CD4-positive, alpha-beta memory T cell (primary cell): ENCODE measurements at regions of chr7 and their contacts with region 1.

Region 1: GRCh38 chr7:39894904-39895303 is 55.2 kb upstream of the CDK13 start:
- DNase-seq: no peak
- H3K4me3 ChIP-seq: no peak overlapping the region
- H3K4me3 Mint-ChIP-seq: no peak overlapping the region
- H3K27ac ChIP-seq: no peak overlapping the region
- H3K27ac Mint-ChIP-seq: no peak overlapping the region
- H3K4me1 ChIP-seq: no peaks in the 10 kb centered on the region
- H3K4me1 Mint-ChIP-seq: peaks cover 0 to 2% (median 0%) of the 10 kb centered on the region in 4 donors
- H3K27me3 ChIP-seq: no peaks in the 10 kb centered on the region
- H3K27me3 Mint-ChIP-seq: peaks cover 0 to 11% of the 10 kb centered on the region in 2 donors

Region 2: GRCh38 chr7:39910108-39910869 is 15.4 kb after region 1 on chr7:
- CTCF ChIA-PET with region 1: interaction called, 39 read pairs
- POLR2A ChIA-PET with region 1: no interaction called
- intact Hi-C with region 1: no loop called
- DNase-seq: no peak
- H3K4me3 ChIP-seq: no peak overlapping the region
- H3K4me3 Mint-ChIP-seq: no peak overlapping the region
- H3K27ac ChIP-seq: no peak overlapping the region
- H3K27ac Mint-ChIP-seq: no peak overlapping the region
- H3K4me1 ChIP-seq: peaks cover 3% of the 10 kb centered on the region
- H3K4me1 Mint-ChIP-seq: peaks cover 4 to 5% (median 5%) of the 10 kb centered on the region in 4 donors
- H3K27me3 ChIP-seq: no peaks in the 10 kb centered on the region
- H3K27me3 Mint-ChIP-seq: peaks cover 0 to 2% of the 10 kb centered on the region in 2 donors

Region 3: DNA sequence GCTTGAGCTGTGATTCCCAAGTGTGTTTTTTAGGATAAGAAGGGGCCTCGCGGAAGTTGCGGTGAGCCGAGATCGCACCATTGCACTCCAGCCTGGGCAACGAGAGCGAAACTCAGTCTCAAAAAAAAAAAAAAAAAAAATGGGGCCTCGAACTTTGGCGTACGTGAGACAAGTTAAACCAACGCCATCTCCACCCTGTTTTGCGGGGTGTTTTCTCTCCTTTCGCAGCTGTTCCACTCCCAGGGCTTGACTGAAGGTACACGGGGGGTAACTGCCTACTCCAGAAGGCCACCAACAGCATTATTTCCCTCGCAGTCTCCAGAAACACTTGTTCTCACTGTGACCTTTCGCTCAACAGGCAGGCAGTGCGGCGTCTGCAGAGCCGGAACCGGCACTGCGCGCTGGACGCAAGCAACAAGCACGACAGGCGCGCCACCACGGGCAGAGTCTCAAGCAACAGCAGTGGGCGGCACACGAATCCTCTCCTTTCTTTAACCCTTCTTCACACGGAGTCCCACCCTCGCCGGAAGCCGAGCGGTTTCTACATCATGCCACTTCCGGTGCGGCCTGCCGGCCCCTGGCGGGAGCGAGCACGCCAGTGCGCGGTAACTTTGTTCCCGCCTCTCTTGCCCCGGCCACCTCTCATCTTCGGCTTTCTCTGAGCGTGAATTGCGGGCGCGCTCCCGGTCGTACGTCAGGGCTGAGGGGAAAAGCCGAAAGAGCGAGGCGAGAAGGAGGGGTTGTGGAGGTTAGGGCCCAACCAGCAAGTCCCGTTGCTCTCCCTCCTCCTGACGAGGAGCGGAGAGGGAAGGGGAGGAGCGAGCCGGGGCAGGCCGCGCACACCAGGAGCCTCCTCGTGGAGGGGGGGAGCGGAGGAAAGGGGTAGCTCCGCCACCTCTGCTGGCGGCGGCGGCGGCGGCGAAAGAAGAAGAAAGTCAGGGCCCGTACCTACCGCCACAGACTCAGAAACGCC is 54.3 kb after region 1 on chr7:
- CTCF ChIA-PET with region 1: interaction called, 20 read pairs
- POLR2A ChIA-PET with region 1: interaction called, 6 read pairs
- intact Hi-C with region 1: loop called (anchors 1 kb)
- DNase-seq: peak; percentile 98 to 100 (median 99)
- H3K4me3 ChIP-seq: peak overlapping the region; percentile 67 to 73
- H3K4me3 Mint-ChIP-seq: peak overlapping the region; percentile 96 to 99 (median 98)
- H3K27ac ChIP-seq: peak overlapping the region; percentile 94
- H3K27ac Mint-ChIP-seq: peak overlapping the region; percentile 99 to 100 (median 100)
- H3K4me1 ChIP-seq: peaks cover 32% of the 10 kb centered on the region
- H3K4me1 Mint-ChIP-seq: peaks cover 21 to 47% (median 31%) of the 10 kb centered on the region in 4 donors
- H3K27me3 ChIP-seq: no peaks in the 10 kb centered on the region
- H3K27me3 Mint-ChIP-seq: peaks cover 0 to 5% of the 10 kb centered on the region in 2 donors

Region 4: DNA sequence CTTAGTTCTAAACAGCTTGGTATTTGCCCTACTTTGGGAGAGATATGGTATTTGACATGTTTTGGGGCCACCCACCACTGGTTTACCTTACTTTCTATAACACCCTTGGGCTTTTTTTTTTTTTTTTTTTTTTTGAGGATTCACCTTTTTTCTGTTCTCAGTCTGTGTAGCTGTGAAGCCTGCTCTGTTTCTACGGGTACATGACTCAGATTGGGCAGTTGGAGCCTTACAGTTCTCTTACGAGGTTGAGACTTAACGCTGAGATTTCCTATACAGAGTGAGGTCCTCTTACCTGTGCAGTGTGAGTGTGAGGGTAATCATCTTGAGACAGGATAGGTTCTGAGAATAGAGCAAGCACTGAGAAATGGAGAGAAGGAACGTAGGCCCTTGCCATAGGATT is 132.6 kb after region 1 on chr7:
- CTCF ChIA-PET with region 1: interaction called, 17 read pairs
- POLR2A ChIA-PET with region 1: no interaction called
- intact Hi-C with region 1: no loop called
- DNase-seq: no peak
- H3K4me3 ChIP-seq: no peak overlapping the region
- H3K4me3 Mint-ChIP-seq: no peak overlapping the region
- H3K27ac ChIP-seq: no peak overlapping the region
- H3K27ac Mint-ChIP-seq: peak overlapping the region in 1 of 7 donors; percentile 44
- H3K4me1 ChIP-seq: no peaks in the 10 kb centered on the region
- H3K4me1 Mint-ChIP-seq: peaks cover 11 to 28% (median 19%) of the 10 kb centered on the region in 4 donors
- H3K27me3 ChIP-seq: no peaks in the 10 kb centered on the region
- H3K27me3 Mint-ChIP-seq: no peaks in the 10 kb centered on the region

Region 5: DNA sequence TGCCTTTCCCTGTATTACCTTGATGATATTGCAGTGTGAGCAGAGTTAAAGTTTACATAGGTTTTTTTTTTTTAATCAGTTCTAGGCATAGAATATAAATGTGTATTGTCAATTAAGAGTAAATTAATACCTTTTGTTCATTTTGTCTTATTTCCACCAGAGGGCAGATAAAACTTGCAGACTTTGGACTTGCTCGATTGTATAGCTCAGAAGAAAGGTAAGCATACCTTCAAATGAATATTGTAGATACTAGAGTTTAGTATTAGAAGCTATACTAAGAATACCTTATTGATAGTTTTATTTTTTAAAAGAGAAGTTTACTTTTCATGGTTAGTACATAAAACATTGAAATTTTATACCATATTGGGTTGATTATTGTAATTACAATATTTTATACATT is 152.8 kb after region 1 on chr7:
- CTCF ChIA-PET with region 1: interaction called, 396 read pairs
- POLR2A ChIA-PET with region 1: interaction called, 5 read pairs
- intact Hi-C with region 1: loop called (anchors 1 kb)
- DNase-seq: no peak
- H3K4me3 ChIP-seq: no peak overlapping the region
- H3K4me3 Mint-ChIP-seq: no peak overlapping the region
- H3K27ac ChIP-seq: no peak overlapping the region
- H3K27ac Mint-ChIP-seq: peak overlapping the region in 1 of 7 donors; percentile 36
- H3K4me1 ChIP-seq: no peaks in the 10 kb centered on the region
- H3K4me1 Mint-ChIP-seq: peaks cover 0 to 10% (median 6%) of the 10 kb centered on the region in 4 donors
- H3K27me3 ChIP-seq: no peaks in the 10 kb centered on the region
- H3K27me3 Mint-ChIP-seq: no peaks in the 10 kb centered on the region

Region 6: GRCh38 chr7:40134428-40135316 is 239.8 kb after region 1 on chr7 and contains the starts of genes MPLKIP and SUGCT:
- CTCF ChIA-PET with region 1: interaction called, 8 read pairs
- POLR2A ChIA-PET with region 1: interaction called, 4 read pairs
- intact Hi-C with region 1: loop called (anchors 1 kb)
- DNase-seq: peak; percentile 87 to 93 (median 90)
- H3K4me3 ChIP-seq: peak within 1 kb of the TSS; percentile 98 to 99
- H3K4me3 Mint-ChIP-seq: peak within 1 kb of the TSS; percentile 93 to 100 (median 98)
- H3K27ac ChIP-seq: peak within 1 kb of the TSS; percentile 87
- H3K27ac Mint-ChIP-seq: peak within 1 kb of the TSS; percentile 94 to 100 (median 98)
- H3K4me1 ChIP-seq: peaks cover 38% of the 10 kb centered on the region
- H3K4me1 Mint-ChIP-seq: peaks cover 15 to 49% (median 27%) of the 10 kb centered on the region in 4 donors
- H3K27me3 ChIP-seq: no peaks in the 10 kb centered on the region
- H3K27me3 Mint-ChIP-seq: peaks cover 0 to 4% of the 10 kb centered on the region in 2 donors
- total RNA-seq, gene MPLKIP: 34.3 to 34.8 TPM
- total RNA-seq, gene SUGCT: 1.7 to 4.4 TPM